ENCODE measurements at regions of chr5 and their contacts with region 1.

Region 1: DNA sequence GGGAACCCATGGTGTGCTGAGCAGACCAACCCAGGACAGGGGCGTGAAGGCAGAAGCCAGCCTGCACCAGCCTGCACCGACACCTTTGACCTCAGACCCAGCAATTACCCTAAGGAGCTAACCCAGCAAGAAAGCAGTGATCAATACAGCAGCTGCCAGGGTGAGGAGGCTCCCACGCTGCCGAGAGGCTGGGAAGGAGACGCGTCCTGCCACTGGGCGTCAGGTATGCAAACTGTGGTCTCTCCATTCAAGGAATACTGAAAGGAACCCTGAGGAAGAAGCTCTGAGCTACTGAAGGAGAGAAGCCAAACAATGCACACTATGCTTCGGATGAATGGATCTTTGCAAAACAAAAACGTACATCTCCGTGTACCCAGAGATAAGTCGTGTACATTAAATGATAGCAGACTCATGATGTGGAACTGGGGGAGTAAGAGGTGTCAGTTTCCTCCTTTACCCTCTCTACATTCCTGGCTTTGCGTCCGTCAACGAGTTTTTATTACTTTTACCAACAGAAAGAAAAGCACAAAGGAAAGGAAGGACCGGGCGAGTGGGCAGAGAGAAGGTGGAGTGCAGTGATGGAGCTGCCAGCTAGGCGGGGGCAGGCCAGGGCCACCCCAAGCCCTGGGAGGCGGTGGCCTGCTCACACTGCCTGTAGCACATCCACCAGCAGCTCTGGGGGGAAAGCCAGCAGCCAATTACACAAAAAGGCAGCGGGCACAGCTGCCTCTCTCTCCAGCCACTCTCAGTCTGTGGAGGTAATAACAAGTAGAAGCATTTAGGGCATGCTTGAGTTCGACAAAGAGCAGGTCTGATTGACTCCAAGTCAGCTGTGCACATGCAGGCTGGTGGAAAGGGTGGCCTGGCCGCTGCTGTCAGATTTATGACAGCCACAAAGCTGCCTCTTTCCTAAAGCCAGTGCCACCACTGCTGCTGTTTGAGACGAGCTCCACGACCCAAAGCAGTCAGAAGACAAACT is 29.3 kb downstream of the RASGEF1C start:
- DNase-seq: no peak
- ATAC-seq: no peak
- H3K4me3 ChIP-seq: no peak overlapping the region
- H3K27ac ChIP-seq: no peak overlapping the region
- H3K4me1 ChIP-seq: peaks cover 0 to 8% (median 0%) of the 10 kb centered on the region in 9 donors
- H3K27me3 ChIP-seq: peaks cover 0 to 13% (median 0%) of the 10 kb centered on the region in 7 donors
- CTCF ChIP-seq: no peak

Region 2: DNA sequence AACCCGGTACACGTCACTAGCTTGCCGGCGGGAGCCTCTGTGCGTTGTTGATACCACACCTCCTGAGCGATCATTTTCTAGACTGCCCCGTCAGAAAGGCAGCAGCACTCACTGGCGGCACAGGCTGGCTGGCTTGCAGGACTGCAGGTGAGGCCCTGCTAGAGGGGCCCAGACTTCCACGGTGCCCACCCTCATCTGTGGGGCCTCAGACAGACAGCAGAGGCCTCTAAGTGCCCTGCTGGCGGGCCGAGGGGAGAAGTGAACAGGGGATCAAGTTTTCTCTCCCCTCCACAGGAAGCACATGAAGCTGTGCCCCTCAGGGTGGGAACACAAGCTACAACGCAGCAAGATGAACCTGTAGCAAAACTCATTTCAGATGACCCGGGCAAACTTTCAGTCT is 68.3 kb after region 1 on chr5:
- intact Hi-C with region 1: loop called in 1 of 10 experiments (anchors 2 kb)
- DNase-seq: no peak
- ATAC-seq: no peak
- H3K4me3 ChIP-seq: no peak overlapping the region
- H3K27ac ChIP-seq: no peak overlapping the region
- H3K4me1 ChIP-seq: no peaks in the 10 kb centered on the region
- H3K27me3 ChIP-seq: no peaks in the 10 kb centered on the region
- CTCF ChIP-seq: no peak